Psoas muscle (tissue), 8 donors: ENCODE measurements at regions of chr6 and their contacts with region 1.

Region 1: DNA sequence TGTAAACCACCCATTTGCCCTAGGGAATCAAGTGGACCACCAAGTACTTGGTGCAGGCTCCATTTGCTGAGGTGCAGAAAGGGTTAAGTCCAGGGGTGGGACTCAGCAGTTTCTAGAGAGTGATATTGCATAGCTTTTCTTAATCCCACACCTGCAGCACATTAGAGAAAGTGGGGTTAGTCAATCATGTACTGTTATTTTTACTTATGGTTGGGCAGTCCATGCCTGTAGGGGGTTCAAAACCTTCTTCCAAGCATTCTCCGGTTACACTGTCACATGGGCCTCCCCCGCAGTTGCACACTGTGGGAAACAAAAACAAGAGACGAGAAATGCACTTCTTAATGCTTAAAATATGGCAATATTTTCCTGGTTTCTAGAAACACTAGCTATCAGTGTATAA is 65.5 kb downstream of the LAMA4 start:
- DNase-seq: no peak
- ATAC-seq: no peak
- H3K4me3 ChIP-seq: no peak overlapping the region
- H3K27ac ChIP-seq: no peak overlapping the region
- H3K4me1 ChIP-seq: no peaks in the 10 kb centered on the region
- H3K27me3 ChIP-seq: no peaks in the 10 kb centered on the region
- CTCF ChIP-seq: no peak

Region 2: DNA sequence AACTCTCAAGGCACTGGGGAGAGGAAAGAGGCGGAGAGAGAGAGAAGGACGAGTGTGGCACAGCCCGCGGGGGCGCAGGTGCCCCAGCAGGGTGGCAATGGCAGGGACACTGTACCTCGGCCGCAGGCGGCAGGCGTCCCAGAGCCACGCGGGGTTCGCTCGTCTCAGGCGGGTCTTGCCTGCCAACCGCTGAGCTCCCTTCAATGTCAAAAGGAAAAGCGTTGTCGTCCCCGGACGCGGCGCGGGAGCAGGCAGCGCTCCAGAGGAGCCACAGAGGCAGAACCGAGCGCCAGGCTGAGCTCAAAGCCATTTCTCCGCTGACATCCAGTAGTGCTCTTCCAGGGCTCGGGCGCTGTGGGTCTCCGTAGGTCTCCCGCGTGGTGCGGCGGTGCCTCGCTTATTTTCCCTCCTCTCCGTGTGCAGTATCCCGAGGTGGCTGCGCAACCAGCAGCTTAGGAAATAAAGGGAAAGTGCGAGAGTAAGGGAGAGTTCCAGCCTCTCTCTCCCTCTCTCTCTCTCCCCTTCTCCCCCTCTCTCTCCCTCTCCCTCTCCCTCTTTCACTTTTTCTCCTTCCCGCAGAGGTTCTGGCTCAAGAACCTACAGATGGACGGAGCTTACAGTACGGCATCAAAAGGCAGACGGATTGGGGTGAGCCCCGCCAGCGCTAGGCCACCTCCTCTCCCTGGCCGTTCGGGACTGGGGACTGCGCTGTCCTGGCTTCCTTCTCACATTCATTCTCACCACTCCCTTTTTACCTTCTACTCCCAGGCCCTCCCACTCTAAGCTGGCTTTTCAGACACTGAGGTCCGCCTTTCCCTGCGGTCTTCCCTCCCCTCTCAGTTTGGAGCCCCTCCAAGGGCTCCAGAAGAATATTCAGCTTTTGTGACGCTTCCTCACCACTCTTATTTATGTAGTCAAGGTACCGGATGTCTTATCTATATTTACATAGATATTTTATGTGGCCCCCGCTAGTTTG is 65.2 kb after region 1 on chr6 and contains the start of gene LAMA4:
- intact Hi-C with region 1: loop called in 1 of 2 experiments (anchors 5 kb)
- DNase-seq: peak; percentile 51 to 71
- ATAC-seq: peak; percentile 41 to 78 (median 71)
- H3K4me3 ChIP-seq: peak within 1 kb of the TSS; percentile 85
- H3K27ac ChIP-seq: peak within 1 kb of the TSS; percentile 74
- H3K4me1 ChIP-seq: peaks cover 4% of the 10 kb centered on the region
- H3K27me3 ChIP-seq: peaks cover 0 to 3% (median 2%) of the 10 kb centered on the region in 3 donors
- CTCF ChIP-seq: no peak
- total RNA-seq, gene LAMA4: 5.3 to 15.8 (median 9.6) TPM

Region 3: DNA sequence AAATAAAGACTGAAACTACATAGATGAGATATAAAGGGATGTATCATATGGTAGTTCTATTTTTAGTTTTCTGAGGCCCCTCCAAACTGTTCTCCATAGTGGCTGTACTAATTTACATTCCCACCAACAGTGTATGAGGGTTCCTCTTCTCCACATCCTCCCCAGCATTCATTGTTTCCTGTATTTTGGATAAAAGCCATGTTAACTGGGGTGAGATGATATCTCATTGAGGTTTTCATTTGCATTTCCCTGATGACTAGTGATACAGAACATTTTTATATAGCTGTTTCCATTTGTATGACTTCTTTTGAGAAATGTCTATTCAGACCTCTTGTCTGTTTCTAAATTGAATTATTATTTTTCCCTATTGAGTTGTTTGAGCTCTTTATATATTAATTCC is 387.5 kb after region 1 on chr6:
- intact Hi-C with region 1: no loop called
- DNase-seq: no peak
- ATAC-seq: no peak
- H3K4me3 ChIP-seq: no peak overlapping the region
- H3K27ac ChIP-seq: no peak overlapping the region
- H3K4me1 ChIP-seq: no peaks in the 10 kb centered on the region
- H3K27me3 ChIP-seq: no peaks in the 10 kb centered on the region
- CTCF ChIP-seq: no peak